Activated naive CD4-positive, alpha-beta T cell treated with anti-CD3 and anti-CD28 coated beads for 36 hours (primary cell): ENCODE measurements at regions of chr5 and their contacts with region 1.

Region 1: DNA sequence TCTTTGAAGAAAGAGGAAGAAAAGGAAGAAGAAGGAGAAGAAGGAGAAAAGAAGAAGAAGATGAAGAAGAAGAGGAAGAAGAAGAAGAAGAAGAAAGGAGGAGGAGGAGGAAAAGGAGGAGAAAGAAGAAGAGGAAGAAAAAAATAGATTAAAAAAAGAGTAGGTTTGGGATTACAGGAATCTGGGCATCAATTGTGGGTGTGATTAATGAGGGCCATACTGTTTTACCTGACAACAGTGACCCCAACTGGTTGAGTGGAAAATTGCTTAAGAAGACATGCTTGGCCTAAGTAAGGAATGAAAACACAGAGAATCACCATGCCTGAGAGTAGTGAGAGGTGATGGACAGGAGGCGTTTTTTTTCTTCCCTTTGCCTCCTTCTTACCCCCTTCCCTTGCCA is 114.6 kb downstream of the FAM170A start:
- DNase-seq: peak; percentile 22
- H3K4me3 Mint-ChIP-seq: no peak overlapping the region
- H3K27ac Mint-ChIP-seq: no peak overlapping the region
- H3K4me1 Mint-ChIP-seq: no peaks in the 10 kb centered on the region
- H3K27me3 Mint-ChIP-seq: peaks cover 3% of the 10 kb centered on the region

Region 2: DNA sequence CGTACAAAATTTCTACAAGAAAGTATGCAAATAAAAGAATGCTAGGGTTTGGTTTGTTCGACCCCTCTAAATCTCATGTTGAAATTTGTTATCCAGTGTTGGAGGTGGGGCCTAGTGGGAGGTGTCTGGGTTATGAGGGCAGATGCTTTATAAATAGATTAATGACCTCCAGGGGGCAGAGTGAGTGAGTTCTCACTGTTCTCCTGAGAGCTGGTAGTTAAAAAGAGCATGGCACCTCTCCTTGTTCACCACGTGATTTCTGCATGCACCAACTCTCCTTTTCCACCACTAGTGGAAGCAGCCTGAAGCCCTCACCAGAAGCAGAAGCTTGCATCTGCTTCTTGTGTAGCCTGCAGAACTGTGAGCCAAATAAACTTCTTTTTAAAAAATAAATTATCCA is 165.0 kb before region 1 on chr5:
- CTCF ChIA-PET with region 1: no interaction called
- intact Hi-C with region 1: loop called (anchors 5 kb)
- DNase-seq: peak; percentile 4
- H3K4me3 Mint-ChIP-seq: no peak overlapping the region
- H3K27ac Mint-ChIP-seq: no peak overlapping the region
- H3K4me1 Mint-ChIP-seq: no peaks in the 10 kb centered on the region
- H3K27me3 Mint-ChIP-seq: no peaks in the 10 kb centered on the region

Region 3: GRCh38 chr5:119814655-119815054 is 70.7 kb after region 1 on chr5:
- CTCF ChIA-PET with region 1: no interaction called
- intact Hi-C with region 1: no loop called
- DNase-seq: no peak
- H3K4me3 Mint-ChIP-seq: no peak overlapping the region
- H3K27ac Mint-ChIP-seq: no peak overlapping the region
- H3K4me1 Mint-ChIP-seq: no peaks in the 10 kb centered on the region
- H3K27me3 Mint-ChIP-seq: no peaks in the 10 kb centered on the region